GM10248 (cell line): ENCODE measurements at regions of chr1 and their contacts with region 1.

Region 1: DNA sequence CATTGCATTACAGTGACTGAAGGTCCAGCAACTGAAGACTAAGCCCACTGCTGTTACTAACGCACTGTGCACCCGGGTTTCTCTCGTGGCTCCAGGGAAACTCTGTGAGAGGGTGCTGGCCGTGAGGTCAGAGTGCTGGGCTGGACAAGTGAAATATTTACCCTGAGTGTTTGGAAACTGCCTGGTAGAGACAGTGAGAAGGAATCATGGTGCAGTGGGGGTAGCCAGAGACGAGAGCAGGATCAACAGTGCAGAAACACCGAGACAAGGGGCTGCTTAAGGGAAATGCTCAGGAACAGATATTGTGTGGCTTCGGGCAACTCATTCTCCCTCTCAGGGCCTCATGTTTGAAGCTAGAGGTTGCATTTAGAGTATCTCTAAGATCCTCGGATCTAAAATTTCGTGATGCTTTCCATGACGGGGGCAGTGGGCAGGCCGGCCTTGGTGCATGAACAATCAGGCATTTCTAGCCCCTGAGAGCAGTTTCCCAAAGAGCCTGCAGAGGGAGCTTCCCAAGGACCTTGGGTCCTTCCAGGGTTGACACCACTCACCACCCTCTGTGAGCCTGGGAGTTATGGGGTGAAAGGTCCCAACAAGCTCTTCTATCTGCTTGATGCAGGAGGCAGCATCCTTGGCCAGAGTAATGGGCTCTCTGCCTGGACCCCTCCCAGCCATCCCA is 9.7 kb downstream of the CD2 start:
- DNase-seq: no peak
- CTCF ChIP-seq: no peak

Region 2: DNA sequence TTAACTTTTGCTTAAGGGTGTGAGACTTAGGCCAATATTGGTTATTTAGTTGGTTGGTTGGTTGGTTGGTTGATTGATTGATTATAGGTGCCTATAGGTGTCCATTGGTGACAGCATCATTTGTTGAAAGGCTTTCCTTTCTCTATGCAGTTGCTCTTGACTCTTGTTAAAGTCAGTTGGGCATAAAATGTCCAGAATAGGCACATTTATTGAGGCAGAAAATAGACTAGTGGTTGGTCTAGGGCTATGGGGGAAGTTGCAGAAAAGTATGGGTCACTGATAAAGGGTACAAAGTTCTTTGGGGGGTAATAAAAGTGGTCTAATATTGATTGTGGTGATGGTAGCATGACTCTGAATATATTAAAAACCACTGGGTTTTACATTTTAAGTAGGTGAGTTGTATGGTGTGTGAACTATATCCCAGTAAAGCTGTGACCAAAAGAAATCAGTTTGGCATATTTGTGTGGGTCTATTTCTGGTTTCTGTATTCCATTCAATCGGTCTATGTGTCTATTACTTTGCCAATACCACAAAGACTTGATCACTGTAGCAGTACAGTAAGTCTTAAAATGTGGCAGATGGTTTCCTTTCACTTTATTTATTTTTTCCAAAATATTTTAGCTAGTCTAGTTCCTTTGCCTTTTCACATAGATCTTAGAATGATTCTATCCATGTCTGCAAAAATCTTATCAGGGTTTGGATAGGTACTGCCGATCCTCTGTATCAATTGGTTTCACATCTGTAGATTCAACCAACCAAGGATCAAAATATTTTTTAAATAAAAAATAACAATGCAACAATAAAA is 327.9 kb before region 1 on chr1:
- CTCF ChIA-PET with region 1: no interaction called
- POLR2A ChIA-PET with region 1: no interaction called
- DNase-seq: no peak
- CTCF ChIP-seq: no peak

Region 3: GRCh38 chr1:116679091-116679827 is 84.7 kb before region 1 on chr1:
- CTCF ChIA-PET with region 1: no interaction called
- POLR2A ChIA-PET with region 1: no interaction called
- DNase-seq: no peak
- CTCF ChIP-seq: no peak

Region 4: GRCh38 chr1:116748272-116748671 is 15.7 kb before region 1 on chr1:
- CTCF ChIA-PET with region 1: interaction called, 22 read pairs
- POLR2A ChIA-PET with region 1: no interaction called
- DNase-seq: no peak
- CTCF ChIP-seq: no peak

Region 5: GRCh38 chr1:116775116-116775752 is 11.3 kb after region 1 on chr1:
- CTCF ChIA-PET with region 1: interaction called, 14 read pairs
- POLR2A ChIA-PET with region 1: no interaction called
- DNase-seq: no peak
- CTCF ChIP-seq: no peak

Region 6: GRCh38 chr1:116833718-116834117 is 69.8 kb after region 1 on chr1:
- CTCF ChIA-PET with region 1: no interaction called
- POLR2A ChIA-PET with region 1: no interaction called
- DNase-seq: no peak
- CTCF ChIP-seq: no peak